ENCODE measurements at regions of chr1 and their contacts with region 1.

Region 1: GRCh38 chr1:96721416-96722160 is at the start of gene PTBP2:
- DNase-seq: peak; percentile 88
- H3K4me3 ChIP-seq: peak within 1 kb of the TSS; percentile 79 to 95 (median 88)
- H3K27ac ChIP-seq: peak within 1 kb of the TSS; percentile 94 to 98 (median 95)
- H3K4me1 ChIP-seq: peaks cover 0 to 38% (median 19%) of the 10 kb centered on the region in 4 donors
- H3K27me3 ChIP-seq: no peaks in the 10 kb centered on the region
- CTCF ChIP-seq: no peak
- EP300 ChIP-seq: no peak
- POLR2A ChIP-seq: peak in 1 of 2 donors; percentile 0
- total RNA-seq, gene PTBP2: 136 to 201 (median 178) TPM

Region 2: GRCh38 chr1:96487394-96487793 is 234.2 kb before region 1 on chr1:
- intact Hi-C with region 1: loop called (anchors 10 kb)
- DNase-seq: no peak
- H3K4me3 ChIP-seq: peak overlapping the region in 2 of 4 donors; percentile 2 to 7
- H3K27ac ChIP-seq: peak overlapping the region in 3 of 4 donors; percentile 76 to 81 (median 79)
- H3K4me1 ChIP-seq: peaks cover 0 to 54% (median 32%) of the 10 kb centered on the region in 4 donors
- H3K27me3 ChIP-seq: no peaks in the 10 kb centered on the region
- CTCF ChIP-seq: no peak
- EP300 ChIP-seq: no peak
- POLR2A ChIP-seq: no peak

Region 3: DNA sequence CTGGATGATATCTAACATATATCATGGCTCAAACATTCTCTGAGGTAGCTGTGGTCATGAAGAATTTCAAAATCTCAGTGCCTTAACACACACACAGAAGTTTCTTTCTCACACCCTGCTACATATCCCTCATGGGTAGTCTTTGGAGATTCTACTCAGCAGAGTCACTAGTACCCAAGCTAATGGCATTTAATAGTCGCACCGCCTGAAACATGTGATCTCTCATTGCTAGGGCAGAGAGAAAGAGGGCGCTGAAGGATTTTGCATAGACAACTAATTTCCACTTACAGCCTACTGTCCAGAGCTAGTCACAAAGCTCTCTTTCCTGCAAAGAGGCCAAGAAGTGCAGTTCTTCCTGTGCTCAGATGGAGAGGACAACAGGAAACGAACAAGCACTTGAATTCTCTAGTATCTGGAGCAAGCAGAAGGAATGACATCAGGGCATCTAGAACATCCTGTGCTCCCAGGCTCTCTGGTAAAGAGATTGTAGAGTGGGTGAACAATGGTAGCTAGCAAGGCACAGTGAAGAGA is 183.4 kb before region 1 on chr1:
- intact Hi-C with region 1: loop called (anchors 2 kb)
- DNase-seq: peak; percentile 86
- H3K4me3 ChIP-seq: no peak overlapping the region
- H3K27ac ChIP-seq: peak overlapping the region; percentile 80 to 86 (median 82)
- H3K4me1 ChIP-seq: peaks cover 0 to 56% (median 43%) of the 10 kb centered on the region in 4 donors
- H3K27me3 ChIP-seq: no peaks in the 10 kb centered on the region
- CTCF ChIP-seq: peak in 1 of 4 experiments; percentile 16
- EP300 ChIP-seq: peak; percentile 69 to 96 (median 86)
- POLR2A ChIP-seq: no peak

Region 4: GRCh38 chr1:96815914-96816313 is 94.3 kb after region 1 on chr1:
- intact Hi-C with region 1: loop called (anchors 5 kb)
- DNase-seq: no peak
- H3K4me3 ChIP-seq: no peak overlapping the region
- H3K27ac ChIP-seq: no peak overlapping the region
- H3K4me1 ChIP-seq: peaks cover 0 to 47% (median 6%) of the 10 kb centered on the region in 4 donors
- H3K27me3 ChIP-seq: no peaks in the 10 kb centered on the region
- CTCF ChIP-seq: no peak
- EP300 ChIP-seq: no peak
- POLR2A ChIP-seq: no peak